ENCODE measurements at regions of chr16 and their contacts with region 1.

Region 1: GRCh38 chr16:11742539-11743307 is at the start of gene TXNDC11:
- DNase-seq: peak; percentile 99
- H3K4me3 Mint-ChIP-seq: peak within 1 kb of the TSS; percentile 89
- H3K27ac Mint-ChIP-seq: peak within 1 kb of the TSS; percentile 94
- H3K4me1 Mint-ChIP-seq: peaks cover 47% of the 10 kb centered on the region
- H3K27me3 Mint-ChIP-seq: no peaks in the 10 kb centered on the region
- total RNA-seq, gene TXNDC11: 28.4 to 29.9 TPM

Region 2: DNA sequence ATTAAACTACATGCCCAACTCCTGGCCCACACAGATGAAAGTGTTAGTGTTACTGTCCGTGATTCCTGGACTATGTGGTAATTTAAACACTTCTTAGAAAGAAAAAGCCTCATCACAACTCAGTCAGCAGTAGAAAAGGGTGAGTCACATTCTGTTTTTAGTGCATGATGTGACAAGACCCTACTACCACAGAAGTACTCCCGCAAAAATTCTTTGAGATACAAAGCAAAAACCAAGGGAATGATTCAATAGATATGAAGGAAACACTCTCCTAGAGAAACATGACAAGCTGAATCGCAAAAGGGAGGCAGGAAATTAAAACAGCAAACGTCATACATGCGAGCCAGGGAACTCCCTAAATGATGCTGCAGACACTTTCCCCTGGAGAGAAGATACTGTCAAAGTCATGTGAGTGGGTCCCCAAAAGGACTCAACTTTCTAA is 60.0 kb before region 1 on chr16:
- CTCF ChIA-PET with region 1: no interaction called
- POLR2A ChIA-PET with region 1: no interaction called
- intact Hi-C with region 1: no loop called
- DNase-seq: no peak
- H3K4me3 Mint-ChIP-seq: no peak overlapping the region
- H3K27ac Mint-ChIP-seq: peak overlapping the region; percentile 71
- H3K4me1 Mint-ChIP-seq: peaks cover 56% of the 10 kb centered on the region
- H3K27me3 Mint-ChIP-seq: no peaks in the 10 kb centered on the region

Region 3: GRCh38 chr16:11783319-11784037 is 40.8 kb after region 1 on chr16:
- CTCF ChIA-PET with region 1: interaction called, 3 read pairs
- POLR2A ChIA-PET with region 1: interaction called, 6 read pairs
- intact Hi-C with region 1: loop called (anchors 1 kb)
- DNase-seq: peak; percentile 61
- H3K4me3 Mint-ChIP-seq: peak overlapping the region; percentile 78
- H3K27ac Mint-ChIP-seq: peak overlapping the region; percentile 100
- H3K4me1 Mint-ChIP-seq: peaks cover 68% of the 10 kb centered on the region
- H3K27me3 Mint-ChIP-seq: no peaks in the 10 kb centered on the region

Region 4: DNA sequence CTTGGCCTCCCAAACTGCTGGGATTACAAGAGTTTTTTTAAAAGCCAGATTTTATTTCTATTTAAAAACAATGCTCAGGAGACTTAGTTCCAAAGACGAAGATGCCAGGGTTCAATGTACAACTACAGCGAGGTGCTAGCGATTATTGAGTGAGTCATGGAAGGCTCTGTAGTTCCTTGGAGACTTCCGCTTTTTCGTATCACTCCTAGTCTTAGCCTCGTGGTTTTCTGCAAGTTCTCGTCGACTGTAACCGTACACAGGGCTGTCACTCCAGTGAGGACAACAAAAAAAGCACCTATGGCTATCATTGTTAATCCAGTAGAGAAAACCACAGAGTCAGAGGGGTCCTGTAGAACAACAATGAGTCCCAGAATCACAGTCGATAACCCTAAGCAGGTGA is 77.1 kb after region 1 on chr16:
- CTCF ChIA-PET with region 1: no interaction called
- POLR2A ChIA-PET with region 1: no interaction called
- intact Hi-C with region 1: no loop called
- DNase-seq: no peak
- H3K4me3 Mint-ChIP-seq: no peak overlapping the region
- H3K27ac Mint-ChIP-seq: no peak overlapping the region
- H3K4me1 Mint-ChIP-seq: no peaks in the 10 kb centered on the region
- H3K27me3 Mint-ChIP-seq: no peaks in the 10 kb centered on the region

Region 5: DNA sequence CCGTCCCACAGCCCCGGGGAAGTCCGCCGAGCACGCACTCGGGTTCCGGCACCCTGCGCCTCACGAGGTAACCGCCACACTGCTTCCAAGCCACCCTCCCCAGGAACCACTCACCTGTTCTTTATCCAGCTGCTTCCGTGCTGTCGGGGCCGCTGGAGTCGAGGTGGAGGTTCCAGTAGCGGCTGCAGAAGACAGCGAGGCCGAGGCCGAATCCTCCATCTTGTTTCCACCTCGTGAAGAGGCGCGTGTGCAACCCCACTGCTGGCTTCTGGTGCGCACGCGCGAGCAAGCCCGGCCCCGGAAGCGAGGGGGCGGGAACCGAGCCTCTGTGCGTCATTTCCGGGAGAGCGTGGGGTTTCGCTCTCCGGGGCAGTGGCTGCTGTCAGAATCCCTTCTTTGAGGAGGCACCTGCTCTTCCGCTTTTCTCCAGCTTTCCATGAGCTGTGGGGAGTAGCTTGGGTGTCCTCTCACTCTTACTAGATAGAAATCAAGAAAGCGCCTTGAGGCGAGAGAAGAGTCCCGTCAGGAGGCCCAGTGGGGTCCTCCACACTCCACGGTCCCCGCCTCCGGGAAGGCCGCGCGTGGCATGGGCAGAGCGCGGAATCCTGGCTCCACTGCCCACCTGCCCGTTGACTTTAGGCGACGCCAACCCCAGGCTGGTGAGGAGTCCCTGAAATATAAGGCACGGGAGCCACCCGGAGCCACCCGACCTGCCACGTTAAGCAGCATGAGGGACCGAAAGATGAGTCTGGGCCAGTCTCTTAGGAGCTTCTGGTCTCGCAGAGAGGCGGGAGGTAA is 108.8 kb after region 1 on chr16 and contains the start of gene RSL1D1:
- CTCF ChIA-PET with region 1: no interaction called
- POLR2A ChIA-PET with region 1: interaction called, 5 read pairs
- intact Hi-C with region 1: loop called (anchors 2 kb)
- DNase-seq: peak; percentile 96
- H3K4me3 Mint-ChIP-seq: peak within 1 kb of the TSS; percentile 94
- H3K27ac Mint-ChIP-seq: peak within 1 kb of the TSS; percentile 89
- H3K4me1 Mint-ChIP-seq: peaks cover 52% of the 10 kb centered on the region
- H3K27me3 Mint-ChIP-seq: no peaks in the 10 kb centered on the region
- total RNA-seq, gene RSL1D1: 287 to 296 TPM

Region 6: DNA sequence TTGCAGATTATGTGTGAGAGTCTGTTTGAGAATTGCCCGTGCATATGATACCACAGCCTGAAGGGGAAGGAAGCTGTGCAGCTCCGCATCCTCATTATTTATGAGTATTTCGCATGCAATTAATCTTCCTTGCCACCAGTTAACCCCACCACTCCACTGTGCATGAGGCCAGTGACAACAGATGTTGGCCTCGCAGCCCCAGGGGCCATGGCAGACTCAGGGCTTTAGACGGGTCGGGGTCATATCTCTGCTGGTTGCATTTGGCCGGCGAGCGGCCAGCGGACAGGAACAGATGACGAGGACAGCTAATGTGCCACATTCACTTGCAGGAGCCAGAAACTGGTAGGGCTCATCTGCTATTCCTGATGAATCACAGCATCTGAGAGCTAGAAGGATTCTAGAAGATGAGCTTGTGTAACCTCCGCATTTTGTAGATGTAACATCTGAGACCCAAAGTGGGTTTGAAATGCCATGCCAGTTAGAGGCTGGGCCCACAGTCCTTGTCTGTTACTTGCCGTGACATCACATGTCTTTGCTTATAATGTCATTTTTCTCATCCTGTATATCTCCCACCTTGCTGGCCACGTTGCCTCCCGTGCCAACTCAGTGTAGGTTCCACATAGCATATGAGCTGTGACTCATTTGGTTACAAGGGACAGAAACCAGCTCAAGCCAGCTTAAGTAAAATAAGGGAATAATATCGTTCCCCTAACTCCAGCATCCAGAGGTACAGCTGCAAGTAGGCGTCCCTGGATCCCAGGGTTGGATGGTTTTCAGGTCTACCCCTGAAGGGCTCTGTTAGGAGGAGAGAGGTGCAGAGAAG is 371.0 kb after region 1 on chr16:
- CTCF ChIA-PET with region 1: no interaction called
- POLR2A ChIA-PET with region 1: no interaction called
- intact Hi-C with region 1: no loop called
- DNase-seq: no peak
- H3K4me3 Mint-ChIP-seq: no peak overlapping the region
- H3K27ac Mint-ChIP-seq: no peak overlapping the region
- H3K4me1 Mint-ChIP-seq: no peaks in the 10 kb centered on the region
- H3K27me3 Mint-ChIP-seq: no peaks in the 10 kb centered on the region

Measured in activated CD4-positive, alpha-beta memory T cell treated with anti-CD3 and anti-CD28 coated beads for 36 hours (primary cell).